ENCODE measurements at regions of chr3 and their contacts with region 1.

Region 1: GRCh38 chr3:43855674-43856299 is 165.0 kb downstream of the ABHD5 start:
- DNase-seq: peak; percentile 52
- H3K4me3 ChIP-seq: no peak overlapping the region
- H3K27ac ChIP-seq: no peak overlapping the region
- H3K4me1 ChIP-seq: no peaks in the 10 kb centered on the region
- H3K27me3 ChIP-seq: peaks cover 56% of the 10 kb centered on the region in 2 experiments
- CTCF ChIP-seq: peak; percentile 78 to 82
- POLR2A ChIP-seq: no peak

Region 2: DNA sequence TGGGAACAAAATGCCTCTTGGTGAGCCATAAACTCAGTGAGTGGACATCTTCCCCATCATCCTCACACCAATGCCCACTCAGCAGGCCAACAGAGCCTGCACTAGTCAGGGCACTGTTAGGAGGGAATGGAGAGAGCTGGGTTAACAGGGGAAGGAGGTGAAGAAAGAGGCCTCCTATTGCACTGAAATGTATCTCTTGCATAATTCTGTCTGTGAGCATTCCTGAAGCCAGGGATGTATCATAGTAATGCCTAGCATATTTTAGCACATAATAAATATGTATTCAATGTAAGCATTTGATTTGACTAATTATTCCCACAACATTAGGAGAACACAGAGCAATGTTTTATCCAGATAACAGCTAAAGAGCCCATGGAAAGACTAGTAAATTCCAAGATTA is 315.2 kb before region 1 on chr3:
- CTCF ChIA-PET with region 1: interaction called, 10 read pairs
- POLR2A ChIA-PET with region 1: no interaction called
- dilution Hi-C with region 1: no loop called
- intact Hi-C with region 1: loop called (anchors 5 kb)
- DNase-seq: no peak
- H3K4me3 ChIP-seq: no peak overlapping the region
- H3K27ac ChIP-seq: no peak overlapping the region
- H3K4me1 ChIP-seq: peaks cover 3% of the 10 kb centered on the region
- H3K27me3 ChIP-seq: no peaks in the 10 kb centered on the region
- CTCF ChIP-seq: no peak
- POLR2A ChIP-seq: no peak

Region 3: DNA sequence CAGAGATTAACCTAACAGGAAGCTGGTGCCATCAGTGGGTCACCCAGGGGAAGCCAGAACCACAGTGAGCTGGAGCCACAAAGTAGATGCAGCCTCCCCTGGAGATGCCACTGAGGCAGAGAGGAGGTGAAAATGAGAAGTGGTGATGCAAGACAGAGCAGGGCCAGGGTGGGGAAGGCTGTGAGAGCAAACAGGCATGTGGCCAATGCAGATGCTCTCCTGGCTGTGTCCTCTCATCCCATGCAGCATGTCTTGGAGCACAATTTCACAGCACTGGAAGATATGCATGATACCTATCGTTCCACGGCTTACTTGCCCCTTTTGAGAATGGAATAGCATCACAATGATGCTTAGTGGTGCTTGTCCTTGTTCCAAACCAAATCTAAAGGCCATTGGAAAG is 38.7 kb before region 1 on chr3:
- CTCF ChIA-PET with region 1: no interaction called
- POLR2A ChIA-PET with region 1: no interaction called
- dilution Hi-C with region 1: no loop called
- intact Hi-C with region 1: no loop called
- DNase-seq: no peak
- H3K4me3 ChIP-seq: no peak overlapping the region
- H3K27ac ChIP-seq: no peak overlapping the region
- H3K4me1 ChIP-seq: no peaks in the 10 kb centered on the region
- H3K27me3 ChIP-seq: peaks cover 1 to 2% of the 10 kb centered on the region in 2 experiments
- CTCF ChIP-seq: no peak
- POLR2A ChIP-seq: no peak

Region 4: GRCh38 chr3:43870120-43870519 is 14.3 kb after region 1 on chr3:
- CTCF ChIA-PET with region 1: interaction called, 140 read pairs
- POLR2A ChIA-PET with region 1: no interaction called
- dilution Hi-C with region 1: no loop called
- intact Hi-C with region 1: no loop called
- DNase-seq: peak; percentile 77
- H3K4me3 ChIP-seq: no peak overlapping the region
- H3K27ac ChIP-seq: peak overlapping the region; percentile 49
- H3K4me1 ChIP-seq: peaks cover 49% of the 10 kb centered on the region
- H3K27me3 ChIP-seq: no peaks in the 10 kb centered on the region
- CTCF ChIP-seq: no peak
- POLR2A ChIP-seq: no peak

Region 5: GRCh38 chr3:43921056-43921648 is 65.4 kb after region 1 on chr3:
- CTCF ChIA-PET with region 1: interaction called, 11 read pairs
- POLR2A ChIA-PET with region 1: no interaction called
- dilution Hi-C with region 1: no loop called
- intact Hi-C with region 1: no loop called
- DNase-seq: no peak
- H3K4me3 ChIP-seq: no peak overlapping the region
- H3K27ac ChIP-seq: no peak overlapping the region
- H3K4me1 ChIP-seq: no peaks in the 10 kb centered on the region
- H3K27me3 ChIP-seq: peaks cover 14 to 27% of the 10 kb centered on the region in 2 experiments
- CTCF ChIP-seq: no peak
- POLR2A ChIP-seq: no peak

Region 6: GRCh38 chr3:44114142-44114541 is 258.4 kb after region 1 on chr3:
- CTCF ChIA-PET with region 1: interaction called, 48 read pairs
- POLR2A ChIA-PET with region 1: no interaction called
- dilution Hi-C with region 1: no loop called
- intact Hi-C with region 1: loop called (anchors 1 kb)
- DNase-seq: peak; percentile 34
- H3K4me3 ChIP-seq: no peak overlapping the region
- H3K27ac ChIP-seq: no peak overlapping the region
- H3K4me1 ChIP-seq: no peaks in the 10 kb centered on the region
- H3K27me3 ChIP-seq: peaks cover 0 to 2% of the 10 kb centered on the region in 2 experiments
- CTCF ChIP-seq: peak; percentile 37 to 79
- POLR2A ChIP-seq: no peak

Region 7: GRCh38 chr3:44482725-44483124 is 626.9 kb after region 1 on chr3:
- CTCF ChIA-PET with region 1: no interaction called
- POLR2A ChIA-PET with region 1: no interaction called
- dilution Hi-C with region 1: no loop called
- intact Hi-C with region 1: no loop called
- DNase-seq: no peak
- H3K4me3 ChIP-seq: no peak overlapping the region
- H3K27ac ChIP-seq: no peak overlapping the region
- H3K4me1 ChIP-seq: peaks cover 2% of the 10 kb centered on the region
- H3K27me3 ChIP-seq: no peaks in the 10 kb centered on the region
- CTCF ChIP-seq: no peak
- POLR2A ChIP-seq: no peak

Measured in endothelial cell of umbilical vein (primary cell).